Activated CD8-positive, alpha-beta T cell treated with anti-CD3 and anti-CD28 coated beads, Interleukin-2, amount 10 ng/mL, durations not matched to agents 7 days and 5 days (primary cell): ENCODE measurements at regions of chr7 and their contacts with region 1.

Region 1: DNA sequence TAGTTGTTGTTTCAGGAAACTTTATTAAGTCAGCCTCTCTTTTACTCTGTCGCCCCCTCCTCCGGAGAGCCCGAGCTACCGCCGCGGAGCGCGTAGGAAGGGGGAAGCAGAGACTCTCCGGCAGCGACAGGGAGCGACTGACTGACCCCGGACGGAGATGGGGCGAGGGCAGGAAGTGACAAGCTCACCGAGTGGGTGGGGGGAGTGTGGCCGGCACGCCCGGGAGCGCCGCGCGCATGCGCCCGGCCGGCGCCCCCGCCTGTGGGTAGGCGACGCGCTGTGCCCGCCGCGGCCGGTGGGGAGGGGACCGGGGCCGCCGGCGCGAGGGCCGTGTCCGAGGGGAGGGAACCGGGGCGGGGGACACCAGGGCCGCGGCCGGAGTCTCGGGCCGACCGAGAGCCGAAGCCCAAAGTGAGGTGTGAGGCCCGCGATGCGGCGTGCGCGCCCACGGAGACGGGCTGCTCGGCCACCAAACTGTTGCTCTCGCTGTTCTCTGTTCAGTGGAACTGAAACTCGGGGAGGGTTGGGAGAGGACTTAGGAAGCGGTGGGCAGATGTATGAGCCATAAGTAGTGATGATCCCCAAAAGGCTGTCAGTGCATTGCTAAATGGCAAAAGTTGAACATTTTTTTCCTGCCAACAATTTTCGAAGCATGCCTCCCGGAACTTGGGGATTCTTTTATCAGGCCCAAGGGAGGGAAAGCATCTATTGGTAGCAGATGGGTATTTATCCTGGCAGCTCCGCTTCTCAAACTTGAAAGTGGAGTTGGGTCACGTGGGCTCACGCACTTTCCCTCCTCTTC is at the start of gene ZNF800:
- DNase-seq: peak; percentile 91
- ATAC-seq: peak; percentile 81
- H3K4me3 Mint-ChIP-seq: peak within 1 kb of the TSS; percentile 98
- H3K27ac Mint-ChIP-seq: peak within 1 kb of the TSS; percentile 98
- H3K4me1 Mint-ChIP-seq: peaks cover 59% of the 10 kb centered on the region
- H3K27me3 Mint-ChIP-seq: no peaks in the 10 kb centered on the region
- total RNA-seq, gene ZNF800: 40.7 to 43.2 TPM

Region 2: DNA sequence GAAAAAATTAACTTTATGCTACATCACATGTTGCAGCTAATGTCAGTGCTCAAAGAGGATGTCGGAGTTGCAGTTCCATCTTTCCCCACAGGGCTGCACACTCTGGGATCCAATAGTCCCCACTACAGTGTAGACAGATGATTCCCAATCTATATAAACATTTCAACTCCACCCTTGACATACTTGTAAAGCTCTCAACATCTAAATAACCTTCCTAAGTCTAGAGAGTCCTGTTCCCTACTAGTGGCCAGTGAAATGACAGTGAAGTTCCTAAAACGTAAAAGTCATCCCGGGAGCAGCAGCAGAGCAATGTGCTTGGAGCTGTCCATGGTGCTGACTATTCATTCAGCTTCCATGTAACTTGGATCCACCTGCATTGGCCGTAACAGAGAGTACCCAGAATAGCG is 285.2 kb before region 1 on chr7:
- CTCF ChIA-PET with region 1: no interaction called
- POLR2A ChIA-PET with region 1: no interaction called
- DNase-seq: peak; percentile 68
- ATAC-seq: peak; percentile 73
- H3K4me3 Mint-ChIP-seq: no peak overlapping the region
- H3K27ac Mint-ChIP-seq: no peak overlapping the region
- H3K4me1 Mint-ChIP-seq: no peaks in the 10 kb centered on the region
- H3K27me3 Mint-ChIP-seq: no peaks in the 10 kb centered on the region

Region 3: DNA sequence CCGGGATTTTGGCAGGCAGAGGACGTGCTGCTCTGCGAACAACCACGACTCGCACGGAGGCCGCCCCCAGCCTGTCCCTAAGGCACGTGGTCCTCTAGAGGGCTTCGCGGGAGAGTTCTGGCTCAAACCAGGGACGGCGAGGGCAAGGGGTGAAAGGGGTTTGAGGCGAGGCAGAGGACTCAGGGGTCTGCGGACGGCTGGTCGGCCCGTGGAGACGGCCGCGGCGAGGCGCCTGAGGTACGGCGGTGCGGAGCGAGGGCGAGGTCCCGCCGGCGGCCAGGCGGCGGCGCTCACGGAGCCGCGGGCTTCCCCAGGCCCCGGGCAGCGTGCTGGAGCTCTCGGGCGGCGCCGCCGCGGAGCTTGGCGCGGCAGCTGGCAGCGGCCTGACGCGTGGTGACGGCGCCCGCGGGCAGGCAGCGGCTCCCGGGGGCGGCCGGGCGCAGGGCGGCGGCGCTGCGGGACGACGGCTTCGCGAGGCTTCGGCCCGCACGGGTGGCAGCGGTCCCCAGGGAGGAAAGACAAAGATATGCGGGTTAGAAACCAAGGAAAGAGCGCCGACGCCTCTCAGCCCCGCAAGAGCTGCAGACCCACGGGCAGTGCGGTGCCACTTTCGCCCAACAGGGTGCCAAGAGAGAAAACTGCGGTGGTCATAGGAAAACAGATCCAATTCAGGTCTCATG is 45.1 kb before region 1 on chr7:
- CTCF ChIA-PET with region 1: interaction called, 20 read pairs
- POLR2A ChIA-PET with region 1: interaction called, 18 read pairs
- DNase-seq: peak; percentile 71
- ATAC-seq: peak; percentile 99
- H3K4me3 Mint-ChIP-seq: peak overlapping the region; percentile 51
- H3K27ac Mint-ChIP-seq: no peak overlapping the region
- H3K4me1 Mint-ChIP-seq: peaks cover 8% of the 10 kb centered on the region
- H3K27me3 Mint-ChIP-seq: peaks cover 15% of the 10 kb centered on the region

Region 4: DNA sequence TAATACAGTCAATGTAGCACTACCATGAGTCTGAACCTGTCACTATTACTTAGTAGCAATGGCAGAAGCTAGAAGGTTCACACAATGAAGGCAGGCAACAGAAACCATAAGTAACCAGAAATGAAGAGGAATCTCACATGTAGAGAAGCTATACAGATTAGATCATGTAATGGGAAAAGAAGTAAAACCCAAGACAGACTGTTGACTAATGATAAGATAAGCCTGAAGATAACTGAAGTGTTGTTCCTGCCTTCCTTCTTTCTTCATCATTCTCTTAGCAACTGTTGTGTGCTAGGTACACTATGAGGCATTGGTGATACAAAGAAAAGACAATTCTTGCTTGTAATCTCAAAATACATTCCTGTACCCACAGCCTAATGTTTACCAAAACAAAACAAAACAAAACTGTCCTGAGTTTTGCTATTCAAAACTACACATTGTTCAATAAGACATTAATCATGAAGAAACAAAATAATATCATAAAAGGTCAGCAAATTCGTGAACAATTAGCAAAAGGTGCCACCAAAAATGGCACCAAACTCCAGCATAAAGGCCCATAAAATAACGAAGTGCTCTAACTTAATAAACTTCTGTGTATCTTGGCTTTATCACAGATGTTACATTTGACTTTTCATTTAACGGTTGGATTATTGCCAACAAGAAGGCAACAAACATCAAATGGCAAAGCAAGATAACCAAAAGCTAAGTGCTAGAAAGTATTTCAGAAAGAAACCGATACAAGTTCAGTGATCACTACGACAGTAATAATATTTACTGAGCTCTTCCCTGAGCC is 27.4 kb before region 1 on chr7:
- CTCF ChIA-PET with region 1: no interaction called
- POLR2A ChIA-PET with region 1: interaction called, 16 read pairs
- DNase-seq: no peak
- ATAC-seq: no peak
- H3K4me3 Mint-ChIP-seq: no peak overlapping the region
- H3K27ac Mint-ChIP-seq: no peak overlapping the region
- H3K4me1 Mint-ChIP-seq: peaks cover 8% of the 10 kb centered on the region
- H3K27me3 Mint-ChIP-seq: no peaks in the 10 kb centered on the region

Region 5: DNA sequence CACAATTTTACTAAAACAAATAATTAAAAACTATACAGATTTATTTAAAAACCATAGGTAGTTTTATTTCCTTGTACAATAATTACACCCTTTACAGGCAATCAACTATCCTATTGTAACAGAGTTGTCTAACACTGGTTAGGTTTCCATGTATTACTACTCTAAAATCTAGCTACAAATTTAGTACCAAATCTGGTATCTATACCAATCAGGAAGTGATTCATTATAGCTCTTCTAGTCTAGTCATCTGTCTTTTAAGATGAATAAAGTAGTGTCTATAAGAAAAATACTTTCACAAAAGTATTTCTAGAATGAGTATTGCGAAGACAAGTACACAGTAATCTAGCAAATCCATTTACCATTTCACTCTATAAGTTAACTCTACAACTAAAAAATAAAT is 17.1 kb before region 1 on chr7:
- CTCF ChIA-PET with region 1: interaction called, 5 read pairs
- POLR2A ChIA-PET with region 1: interaction called, 16 read pairs
- DNase-seq: no peak
- ATAC-seq: no peak
- H3K4me3 Mint-ChIP-seq: no peak overlapping the region
- H3K27ac Mint-ChIP-seq: no peak overlapping the region
- H3K4me1 Mint-ChIP-seq: peaks cover 39% of the 10 kb centered on the region
- H3K27me3 Mint-ChIP-seq: no peaks in the 10 kb centered on the region

Region 6: GRCh38 chr7:127404286-127405072 is 11.7 kb after region 1 on chr7:
- CTCF ChIA-PET with region 1: interaction called, 24 read pairs
- POLR2A ChIA-PET with region 1: interaction called, 41 read pairs
- DNase-seq: no peak
- ATAC-seq: no peak
- H3K4me3 Mint-ChIP-seq: no peak overlapping the region
- H3K27ac Mint-ChIP-seq: no peak overlapping the region
- H3K4me1 Mint-ChIP-seq: peaks cover 12% of the 10 kb centered on the region
- H3K27me3 Mint-ChIP-seq: peaks cover 6% of the 10 kb centered on the region

Region 7: GRCh38 chr7:127413962-127414361 is 21.2 kb after region 1 on chr7:
- CTCF ChIA-PET with region 1: interaction called, 10 read pairs
- POLR2A ChIA-PET with region 1: interaction called, 51 read pairs
- DNase-seq: no peak
- ATAC-seq: peak; percentile 87
- H3K4me3 Mint-ChIP-seq: peak overlapping the region; percentile 29
- H3K27ac Mint-ChIP-seq: peak overlapping the region; percentile 86
- H3K4me1 Mint-ChIP-seq: peaks cover 57% of the 10 kb centered on the region
- H3K27me3 Mint-ChIP-seq: no peaks in the 10 kb centered on the region

Region 8: GRCh38 chr7:127447326-127447945 is 54.7 kb after region 1 on chr7:
- CTCF ChIA-PET with region 1: interaction called, 35 read pairs
- POLR2A ChIA-PET with region 1: interaction called, 23 read pairs
- DNase-seq: peak; percentile 76
- ATAC-seq: peak; percentile 99
- H3K4me3 Mint-ChIP-seq: no peak overlapping the region
- H3K27ac Mint-ChIP-seq: peak overlapping the region; percentile 33
- H3K4me1 Mint-ChIP-seq: peaks cover 13% of the 10 kb centered on the region
- H3K27me3 Mint-ChIP-seq: peaks cover 26% of the 10 kb centered on the region

Region 9: DNA sequence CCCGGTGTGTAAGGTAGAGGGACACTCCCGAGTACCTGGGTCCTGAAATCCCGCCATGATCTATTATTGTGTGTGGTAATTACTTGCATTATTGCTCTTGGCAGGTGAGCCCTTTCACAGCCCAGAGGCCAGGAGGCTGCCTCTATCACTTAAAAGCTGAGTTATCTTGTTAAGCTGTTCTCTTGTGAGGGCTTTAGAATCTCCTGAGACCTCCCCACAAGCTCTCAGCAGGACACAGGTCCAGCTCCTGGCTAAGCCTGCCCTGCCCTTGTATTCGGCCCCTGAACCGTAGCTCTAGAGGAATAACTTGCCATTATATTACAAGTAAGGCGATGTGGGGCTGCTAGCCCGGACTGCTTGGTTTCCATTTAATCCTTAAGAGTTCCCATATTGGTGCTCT is 273.2 kb after region 1 on chr7:
- CTCF ChIA-PET with region 1: no interaction called
- POLR2A ChIA-PET with region 1: no interaction called
- DNase-seq: no peak
- ATAC-seq: no peak
- H3K4me3 Mint-ChIP-seq: no peak overlapping the region
- H3K27ac Mint-ChIP-seq: no peak overlapping the region
- H3K4me1 Mint-ChIP-seq: peaks cover 32% of the 10 kb centered on the region
- H3K27me3 Mint-ChIP-seq: no peaks in the 10 kb centered on the region